Thyroid gland (tissue), 4 donors: ENCODE measurements at regions of chr2 and their contacts with region 1.

Region 1: DNA sequence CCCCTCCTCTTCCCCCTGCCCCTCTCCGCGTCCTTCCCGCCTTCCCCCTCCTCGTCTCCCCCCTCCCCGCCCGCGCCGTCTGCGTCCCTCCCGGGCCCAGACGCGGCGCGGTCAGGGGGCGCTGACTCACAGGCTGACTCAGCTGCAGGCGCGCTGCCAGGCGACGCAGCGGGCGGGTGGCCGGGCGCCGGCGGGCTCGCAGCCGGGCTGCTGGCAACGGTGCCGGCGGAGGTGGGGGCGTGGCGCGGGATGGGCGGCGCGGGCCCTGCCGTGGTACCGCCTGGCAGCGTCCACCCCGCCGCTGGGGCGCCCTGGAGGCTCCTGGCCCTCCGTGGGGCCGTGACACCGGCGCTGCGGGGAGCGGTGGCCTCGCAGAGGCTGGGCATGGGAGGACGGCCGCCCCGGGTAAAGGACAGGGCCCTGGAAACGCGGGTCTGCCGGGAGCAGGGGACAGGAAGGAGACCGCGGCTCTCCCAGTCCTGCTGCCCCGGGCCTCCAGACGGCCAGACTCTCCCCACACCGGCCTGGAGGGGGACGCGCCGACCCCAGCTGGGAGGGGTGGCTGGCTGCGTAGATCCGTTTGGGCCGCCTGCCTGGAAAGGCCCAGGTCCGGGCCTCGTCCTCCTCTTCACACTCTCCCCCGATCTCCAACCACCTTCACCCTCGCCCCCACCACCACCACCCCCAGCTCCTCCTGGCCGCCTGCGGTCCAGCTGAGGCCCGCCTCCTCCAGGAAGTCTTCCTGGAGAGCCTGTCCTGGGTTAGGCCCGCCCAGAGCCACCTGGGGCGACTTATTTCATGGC is 10.0 kb upstream of the PROC start:
- DNase-seq: peak; percentile 94 to 95
- H3K4me3 ChIP-seq: peak overlapping the region in 2 of 3 donors; percentile 7 to 39
- H3K27ac ChIP-seq: peak overlapping the region; percentile 88 to 97 (median 93)
- H3K4me1 ChIP-seq: peaks cover 20 to 41% of the 10 kb centered on the region in 2 donors
- H3K27me3 ChIP-seq: no peaks in the 10 kb centered on the region
- CTCF ChIP-seq: peak in 2 of 6 experiments; percentile 25 to 32
- POLR2A ChIP-seq: peak; percentile 7 to 80

Region 2: DNA sequence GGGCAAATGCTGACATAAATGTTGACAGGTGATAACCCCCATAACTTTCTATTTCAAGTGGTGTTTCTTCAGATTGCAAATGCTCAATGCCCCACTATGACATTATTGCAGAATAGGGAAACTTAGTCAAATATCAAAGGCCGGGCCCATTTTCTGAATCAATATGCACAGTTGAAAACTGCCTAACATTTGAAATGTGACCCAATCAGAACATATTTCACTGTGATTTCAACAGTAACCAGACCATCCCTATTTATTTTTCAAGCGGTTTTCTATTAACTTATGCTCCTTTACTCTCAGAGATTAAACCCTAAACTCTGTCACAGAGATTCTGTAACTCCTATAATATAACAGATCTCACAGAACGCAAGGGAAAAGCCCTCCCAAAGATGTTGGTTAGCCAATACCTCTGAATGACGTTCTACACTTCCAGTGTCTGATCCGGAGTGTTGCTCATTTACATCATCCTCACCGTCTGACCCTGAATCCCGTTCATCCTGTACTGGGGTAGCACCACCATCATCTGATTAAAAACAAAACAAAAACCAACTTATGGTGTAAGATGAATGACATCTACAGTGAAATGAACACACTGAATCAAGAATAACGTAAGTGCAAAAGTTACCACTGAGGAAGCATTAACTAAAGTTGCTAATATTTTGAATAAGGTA is 115.2 kb after region 1 on chr2:
- intact Hi-C with region 1: loop called (anchors 5 kb)
- DNase-seq: no peak
- H3K4me3 ChIP-seq: no peak overlapping the region
- H3K27ac ChIP-seq: no peak overlapping the region
- H3K4me1 ChIP-seq: peaks cover 14 to 20% of the 10 kb centered on the region in 2 donors
- H3K27me3 ChIP-seq: no peaks in the 10 kb centered on the region
- CTCF ChIP-seq: no peak
- POLR2A ChIP-seq: no peak